IMR-90 (cell line): ENCODE measurements at regions of chr3 and their contacts with region 1.

Region 1: GRCh38 chr3:57826245-57826951 is 70.3 kb downstream of the SLMAP start:
- DNase-seq: no peak
- ATAC-seq: no peak
- H3K4me3 ChIP-seq: no peak overlapping the region
- H3K27ac ChIP-seq: no peak overlapping the region
- H3K4me1 ChIP-seq: peaks cover 6% of the 10 kb centered on the region
- H3K27me3 ChIP-seq: no peaks in the 10 kb centered on the region
- CTCF ChIP-seq: peak; percentile 36
- POLR2A ChIP-seq: no peak
- RAD21 ChIP-seq: peak; percentile 51

Region 2: GRCh38 chr3:57659806-57660439 is 166.5 kb before region 1 on chr3:
- CTCF ChIA-PET with region 1: no interaction called
- POLR2A ChIA-PET with region 1: no interaction called
- dilution Hi-C with region 1: no loop called
- in situ Hi-C with region 1: no loop called
- intact Hi-C with region 1: loop called (anchors 5 kb)
- DNase-seq: no peak
- ATAC-seq: no peak
- H3K4me3 ChIP-seq: no peak overlapping the region
- H3K27ac ChIP-seq: no peak overlapping the region
- H3K4me1 ChIP-seq: no peaks in the 10 kb centered on the region
- H3K27me3 ChIP-seq: no peaks in the 10 kb centered on the region
- CTCF ChIP-seq: no peak
- POLR2A ChIP-seq: no peak
- RAD21 ChIP-seq: no peak

Region 3: DNA sequence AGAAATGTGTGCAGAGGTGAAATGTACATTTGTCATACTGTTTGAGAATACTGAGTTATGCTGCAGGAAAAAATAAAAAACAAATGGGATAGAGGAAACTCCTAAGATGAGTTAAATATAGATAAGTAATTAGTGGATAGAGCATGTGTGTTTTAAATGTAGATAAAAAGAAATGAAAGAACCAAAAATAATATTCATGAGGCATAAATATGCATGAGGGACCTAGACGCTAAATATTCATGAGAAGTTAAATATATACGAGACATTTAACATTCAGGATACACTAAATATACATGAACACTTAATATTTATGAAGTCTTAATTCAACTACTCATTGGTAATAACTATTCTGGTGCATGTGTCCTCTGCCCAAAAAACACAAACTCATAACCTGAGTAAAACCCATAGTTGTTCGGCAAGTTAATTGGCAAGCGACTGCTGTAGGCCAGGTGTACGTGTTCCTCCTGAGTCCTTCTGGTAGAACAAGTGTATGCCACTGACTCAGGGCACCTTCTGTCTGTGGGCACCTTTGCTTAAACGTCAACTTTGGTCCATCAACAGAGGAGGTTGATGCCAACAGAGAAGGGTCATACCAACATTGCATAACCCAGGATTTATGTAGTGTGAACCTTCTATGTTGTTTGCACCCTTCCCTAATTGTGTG is 109.1 kb before region 1 on chr3:
- CTCF ChIA-PET with region 1: no interaction called
- POLR2A ChIA-PET with region 1: no interaction called
- dilution Hi-C with region 1: no loop called
- in situ Hi-C with region 1: no loop called
- intact Hi-C with region 1: no loop called
- DNase-seq: no peak
- ATAC-seq: no peak
- H3K4me3 ChIP-seq: no peak overlapping the region
- H3K27ac ChIP-seq: no peak overlapping the region
- H3K4me1 ChIP-seq: no peaks in the 10 kb centered on the region
- H3K27me3 ChIP-seq: no peaks in the 10 kb centered on the region
- CTCF ChIP-seq: no peak
- POLR2A ChIP-seq: no peak
- RAD21 ChIP-seq: no peak